ENCODE measurements at regions of chr2 and their contacts with region 1.

Region 1: DNA sequence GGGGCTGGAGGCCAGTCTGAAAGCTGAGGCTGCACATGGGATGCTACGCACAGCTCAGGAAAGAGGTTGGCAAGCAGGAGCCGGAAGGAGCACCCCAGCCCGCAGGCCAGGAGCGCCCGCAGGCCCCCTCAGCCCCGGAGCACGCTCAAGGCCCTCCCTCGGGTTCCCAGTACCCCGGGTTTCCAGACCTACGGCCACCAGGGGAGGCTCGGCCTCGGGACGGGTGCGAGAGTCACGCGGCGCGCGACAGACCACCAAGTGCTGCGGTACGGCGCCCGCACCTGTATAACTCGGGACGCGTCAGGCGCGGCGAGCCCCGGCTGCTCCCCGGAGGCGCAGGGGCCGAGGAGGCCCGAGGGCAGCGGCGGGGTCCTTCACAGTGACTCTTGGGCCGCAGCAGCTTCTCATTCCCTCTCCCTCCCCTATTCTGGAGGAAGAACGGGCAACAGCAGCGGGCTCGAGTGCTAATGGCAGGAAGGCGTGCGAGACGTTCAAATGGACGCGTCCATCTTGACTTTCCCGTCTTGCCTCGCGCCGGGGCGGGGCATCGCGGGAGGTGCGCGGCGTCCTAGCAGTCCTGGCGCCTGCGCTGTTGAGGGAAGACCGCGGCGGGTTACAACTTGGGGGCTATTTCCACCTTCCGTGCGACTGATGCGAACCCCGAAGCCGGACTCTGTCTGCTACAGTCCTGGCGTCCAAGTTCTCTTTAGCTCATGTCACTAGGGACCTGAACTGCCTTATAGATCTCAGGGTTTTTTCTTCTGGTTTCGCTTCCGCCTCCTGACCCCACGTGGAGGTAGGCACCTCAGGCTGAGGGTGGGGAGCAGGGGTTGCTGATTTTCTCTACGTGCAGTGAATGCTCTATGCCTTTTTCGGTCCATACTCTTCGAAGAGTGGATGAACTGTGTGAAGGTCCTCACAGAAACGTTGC is at the start of gene ANAPC1:
- DNase-seq: peak; percentile 73 to 80
- H3K4me3 ChIP-seq: peak within 1 kb of the TSS; percentile 73
- H3K27ac ChIP-seq: peak within 1 kb of the TSS; percentile 72
- H3K4me1 ChIP-seq: peaks cover 15% of the 10 kb centered on the region
- H3K27me3 ChIP-seq: no peaks in the 10 kb centered on the region
- CTCF ChIP-seq: no peak; the same call in 1 of the 2 replicates
- total RNA-seq, gene ANAPC1: 59.6 and 65.1 TPM in 2 replicates

Region 2: DNA sequence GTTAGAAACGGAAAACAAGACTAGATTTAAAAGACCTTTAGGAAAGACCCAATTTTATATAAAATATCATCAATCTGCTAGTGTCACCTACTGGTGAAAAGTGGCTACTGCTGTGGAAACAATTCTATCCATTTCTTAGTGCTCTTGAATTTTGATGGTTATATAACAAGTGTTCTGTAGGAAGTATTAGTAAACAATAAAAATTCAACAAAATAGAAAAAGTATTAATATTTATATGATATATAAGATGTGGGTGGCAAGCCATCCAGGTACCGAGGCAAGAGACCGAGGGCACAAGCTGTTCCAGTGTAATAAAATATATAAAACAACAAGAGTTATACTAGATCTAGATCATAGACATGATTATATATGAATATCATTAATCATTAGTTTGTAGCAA is 165.0 kb after region 1 on chr2:
- CTCF ChIA-PET with region 1: interaction called, 3 read pairs
- POLR2A ChIA-PET with region 1: no interaction called
- intact Hi-C with region 1: loop called (anchors 1 kb)
- DNase-seq: peak; percentile 33 to 68
- H3K4me3 ChIP-seq: no peak overlapping the region
- H3K27ac ChIP-seq: no peak overlapping the region
- H3K4me1 ChIP-seq: peaks cover 7% of the 10 kb centered on the region
- H3K27me3 ChIP-seq: no peaks in the 10 kb centered on the region
- CTCF ChIP-seq: peak; percentile 89

Region 3: GRCh38 chr2:112121682-112122254 is 237.8 kb after region 1 on chr2:
- CTCF ChIA-PET with region 1: no interaction called
- POLR2A ChIA-PET with region 1: no interaction called
- intact Hi-C with region 1: loop called (anchors 5 kb)
- DNase-seq: no peak
- H3K4me3 ChIP-seq: no peak overlapping the region
- H3K27ac ChIP-seq: no peak overlapping the region
- H3K4me1 ChIP-seq: no peaks in the 10 kb centered on the region
- H3K27me3 ChIP-seq: no peaks in the 10 kb centered on the region
- CTCF ChIP-seq: peak; percentile 79

Region 4: GRCh38 chr2:112254466-112255239 is 370.7 kb after region 1 on chr2 and contains the start of gene ZC3H8:
- CTCF ChIA-PET with region 1: no interaction called
- POLR2A ChIA-PET with region 1: no interaction called
- intact Hi-C with region 1: loop called (anchors 10 kb)
- DNase-seq: peak; percentile 74 to 95
- H3K4me3 ChIP-seq: peak within 1 kb of the TSS; percentile 77
- H3K27ac ChIP-seq: peak within 1 kb of the TSS; percentile 53
- H3K4me1 ChIP-seq: 0 out of 2 replicates have a peak, but pooled peaks cover 5% of the 10 kb centered on the region
- H3K27me3 ChIP-seq: no peaks in the 10 kb centered on the region
- CTCF ChIP-seq: no peak
- total RNA-seq, gene ZC3H8: 8.6 and 11.3 TPM in 2 replicates

Region 5: DNA sequence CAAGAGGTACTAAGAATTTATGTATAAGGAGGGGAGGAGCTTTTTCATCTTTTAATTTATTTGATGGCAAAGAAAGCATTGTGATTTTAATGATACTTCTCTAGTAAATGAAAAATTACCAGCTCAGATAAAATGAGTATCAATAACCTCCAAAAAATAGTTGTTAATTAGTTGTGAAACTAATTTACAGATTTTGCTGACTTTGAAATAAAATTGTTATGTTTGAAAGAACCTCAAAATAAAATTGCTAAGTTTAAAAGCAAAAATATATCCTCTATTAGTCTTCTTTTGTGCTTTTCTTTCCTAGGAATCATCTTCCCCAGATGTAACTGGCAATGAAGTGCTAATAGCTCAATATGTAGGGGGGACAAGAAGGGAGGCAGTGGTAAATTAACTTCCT is 428.0 kb after region 1 on chr2:
- CTCF ChIA-PET with region 1: no interaction called
- POLR2A ChIA-PET with region 1: interaction called, 22 read pairs
- intact Hi-C with region 1: no loop called
- DNase-seq: no peak
- H3K4me3 ChIP-seq: no peak overlapping the region
- H3K27ac ChIP-seq: no peak overlapping the region
- H3K4me1 ChIP-seq: peaks cover 18% of the 10 kb centered on the region
- H3K27me3 ChIP-seq: no peaks in the 10 kb centered on the region
- CTCF ChIP-seq: no peak